Right cardiac atrium (tissue), 5 donors: ENCODE measurements at regions of chr2 and their contacts with region 1.

Region 1: GRCh38 chr2:187442378-187442777 is 5.7 kb downstream of the CALCRL start:
- DNase-seq: no peak
- ATAC-seq: no peak
- H3K4me3 ChIP-seq: no peak overlapping the region
- H3K27ac ChIP-seq: no peak overlapping the region
- H3K4me1 ChIP-seq: no peaks in the 10 kb centered on the region
- H3K27me3 ChIP-seq: no peaks in the 10 kb centered on the region

Region 2: DNA sequence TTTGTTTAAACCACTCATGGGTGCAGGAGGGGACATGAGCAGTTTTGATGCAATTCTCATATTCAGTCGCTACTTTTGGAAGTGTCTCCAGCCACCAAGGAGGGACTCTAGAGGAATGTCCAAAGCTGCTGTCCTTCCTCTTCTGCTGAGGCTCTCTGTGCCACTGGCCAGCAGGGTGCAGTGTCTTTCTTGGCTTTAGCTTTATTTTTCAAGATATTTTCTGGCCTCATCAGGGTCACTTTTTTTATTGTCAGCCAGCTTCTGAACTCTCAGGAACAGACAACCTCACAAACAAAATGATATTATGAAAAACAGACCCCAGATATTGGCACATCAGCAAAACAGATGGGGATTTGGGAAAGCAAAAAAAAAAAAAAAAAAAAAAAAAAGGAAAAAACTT is 304.1 kb before region 1 on chr2:
- intact Hi-C with region 1: loop called in 1 of 4 experiments (anchors 10 kb)
- DNase-seq: peak; percentile 42 to 80 (median 60)
- ATAC-seq: peak; percentile 73 to 86
- H3K4me3 ChIP-seq: no peak overlapping the region
- H3K27ac ChIP-seq: no peak overlapping the region
- H3K4me1 ChIP-seq: no peaks in the 10 kb centered on the region
- H3K27me3 ChIP-seq: no peaks in the 10 kb centered on the region

Region 3: GRCh38 chr2:187187519-187187918 is 254.9 kb before region 1 on chr2:
- intact Hi-C with region 1: no loop called
- DNase-seq: no peak
- ATAC-seq: no peak
- H3K4me3 ChIP-seq: no peak overlapping the region
- H3K27ac ChIP-seq: no peak overlapping the region
- H3K4me1 ChIP-seq: no peaks in the 10 kb centered on the region
- H3K27me3 ChIP-seq: no peaks in the 10 kb centered on the region

Region 4: DNA sequence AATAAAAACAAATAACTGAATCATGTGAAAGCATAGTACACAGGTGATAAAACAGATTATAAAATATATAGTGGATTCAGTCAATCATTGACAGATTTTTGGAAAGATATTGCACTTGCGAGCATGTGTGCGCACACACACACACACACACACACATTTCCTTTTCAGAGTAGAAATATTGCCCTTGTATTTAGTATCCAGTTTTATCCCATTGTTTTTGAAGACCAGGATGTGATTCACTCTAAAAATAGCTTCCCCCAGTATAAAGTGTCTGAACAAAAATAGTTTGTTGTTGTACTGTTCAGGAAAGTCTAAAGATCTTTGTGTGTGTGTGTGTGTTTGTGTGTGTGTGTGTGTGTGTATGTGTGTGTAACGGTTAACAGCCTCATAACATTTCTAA is 139.8 kb before region 1 on chr2:
- intact Hi-C with region 1: loop called in 1 of 4 experiments (anchors 10 kb)
- DNase-seq: no peak
- ATAC-seq: peak; percentile 26 to 90
- H3K4me3 ChIP-seq: no peak overlapping the region
- H3K27ac ChIP-seq: no peak overlapping the region
- H3K4me1 ChIP-seq: peaks cover 2% of the 10 kb centered on the region
- H3K27me3 ChIP-seq: no peaks in the 10 kb centered on the region

Region 5: DNA sequence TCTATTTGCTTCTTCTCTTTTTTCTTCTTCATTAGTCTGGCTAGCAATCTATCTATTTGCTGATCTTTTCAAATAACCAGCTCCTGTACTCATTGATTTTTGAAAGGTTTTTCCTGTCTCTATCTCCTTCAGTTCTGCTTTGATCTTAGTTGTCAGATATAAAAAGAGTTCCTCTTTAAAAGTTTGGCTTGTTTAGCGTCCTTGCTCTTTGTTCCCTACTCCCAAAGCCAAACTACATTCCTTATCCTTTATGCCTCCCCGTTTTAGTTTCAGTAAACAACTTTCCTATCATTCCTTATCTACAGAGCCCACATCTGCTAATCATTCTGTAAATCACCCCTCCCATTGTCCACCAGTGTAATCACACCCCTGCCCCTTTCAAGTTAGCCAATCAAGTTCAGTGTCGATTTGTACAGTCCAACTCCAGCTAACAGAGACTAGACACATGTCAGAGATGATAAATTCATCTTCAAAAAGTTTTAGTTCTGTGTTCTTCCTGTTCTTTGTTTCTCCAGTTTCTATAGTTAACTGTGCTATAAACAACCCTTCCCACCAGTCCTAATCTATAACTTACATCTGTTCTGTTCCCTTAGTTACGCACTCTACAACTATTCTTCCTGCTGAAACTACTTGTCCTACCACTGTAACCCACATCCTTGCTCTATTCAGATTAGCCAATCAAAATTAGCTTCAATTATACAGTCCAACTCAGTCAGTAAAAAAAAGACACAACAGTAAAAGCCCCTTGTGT is 67.5 kb after region 1 on chr2:
- intact Hi-C with region 1: no loop called
- DNase-seq: no peak
- ATAC-seq: no peak
- H3K4me3 ChIP-seq: no peak overlapping the region
- H3K27ac ChIP-seq: no peak overlapping the region
- H3K4me1 ChIP-seq: peaks cover 1% of the 10 kb centered on the region
- H3K27me3 ChIP-seq: no peaks in the 10 kb centered on the region